Activated T-helper 1 cell treated with anti-CD3 and anti-CD28 coated beads, Interleukin-12 subunit alpha, Interleukin-12 subunit beta, Interleukin-2, Interleukin-4 antibody, amounts not matched to agents 30 ng/mL and 10 ng/mL and 1 ng/mL, durations not matched to agents 14 hours and 24 hours and 36 hours (primary cell): ENCODE measurements at regions of chr5 and their contacts with region 1.

Region 1: GRCh38 chr5:35003018-35003957 is 44.5 kb downstream of the AGXT2 start:
- DNase-seq: peak; percentile 40
- H3K4me3 Mint-ChIP-seq: no peak overlapping the region
- H3K27ac Mint-ChIP-seq: no peak overlapping the region
- H3K4me1 Mint-ChIP-seq: no peaks in the 10 kb centered on the region
- H3K27me3 Mint-ChIP-seq: peaks cover 9% of the 10 kb centered on the region

Region 2: DNA sequence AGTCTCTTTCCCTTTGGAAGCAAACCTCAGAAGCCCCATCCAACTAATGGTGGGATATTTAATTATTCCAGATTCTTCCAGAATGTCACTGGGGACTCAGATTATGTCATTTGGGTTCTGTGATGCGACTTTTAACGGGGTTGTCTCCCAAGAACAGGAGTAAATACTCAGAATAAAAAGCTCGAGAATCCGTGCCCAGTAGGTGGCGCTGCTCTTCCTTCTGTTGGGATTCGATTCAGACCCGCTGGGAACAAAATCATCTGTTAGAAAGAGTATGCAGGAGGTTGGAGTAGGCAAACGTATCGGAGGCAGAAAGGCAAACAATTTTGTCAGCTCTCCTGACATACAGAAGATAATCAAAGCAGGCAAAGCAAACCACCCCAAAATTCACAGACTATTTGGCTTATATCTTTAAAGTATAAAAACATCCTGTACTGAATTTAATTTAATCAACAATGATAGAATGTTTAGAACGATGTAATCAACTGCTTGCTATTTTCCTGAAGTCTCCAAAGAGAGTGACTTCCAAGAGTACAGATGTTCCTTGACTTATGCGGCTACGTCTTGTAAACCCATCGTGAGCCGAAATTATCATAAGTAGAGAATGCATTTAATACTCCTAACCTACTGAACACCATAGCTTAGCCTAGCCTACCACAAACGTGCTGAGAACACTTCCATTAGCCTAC is 517.0 kb before region 1 on chr5:
- intact Hi-C with region 1: loop called (anchors 1 kb)
- DNase-seq: peak; percentile 26
- H3K4me3 Mint-ChIP-seq: no peak overlapping the region
- H3K27ac Mint-ChIP-seq: no peak overlapping the region
- H3K4me1 Mint-ChIP-seq: no peaks in the 10 kb centered on the region
- H3K27me3 Mint-ChIP-seq: peaks cover 18% of the 10 kb centered on the region

Region 3: DNA sequence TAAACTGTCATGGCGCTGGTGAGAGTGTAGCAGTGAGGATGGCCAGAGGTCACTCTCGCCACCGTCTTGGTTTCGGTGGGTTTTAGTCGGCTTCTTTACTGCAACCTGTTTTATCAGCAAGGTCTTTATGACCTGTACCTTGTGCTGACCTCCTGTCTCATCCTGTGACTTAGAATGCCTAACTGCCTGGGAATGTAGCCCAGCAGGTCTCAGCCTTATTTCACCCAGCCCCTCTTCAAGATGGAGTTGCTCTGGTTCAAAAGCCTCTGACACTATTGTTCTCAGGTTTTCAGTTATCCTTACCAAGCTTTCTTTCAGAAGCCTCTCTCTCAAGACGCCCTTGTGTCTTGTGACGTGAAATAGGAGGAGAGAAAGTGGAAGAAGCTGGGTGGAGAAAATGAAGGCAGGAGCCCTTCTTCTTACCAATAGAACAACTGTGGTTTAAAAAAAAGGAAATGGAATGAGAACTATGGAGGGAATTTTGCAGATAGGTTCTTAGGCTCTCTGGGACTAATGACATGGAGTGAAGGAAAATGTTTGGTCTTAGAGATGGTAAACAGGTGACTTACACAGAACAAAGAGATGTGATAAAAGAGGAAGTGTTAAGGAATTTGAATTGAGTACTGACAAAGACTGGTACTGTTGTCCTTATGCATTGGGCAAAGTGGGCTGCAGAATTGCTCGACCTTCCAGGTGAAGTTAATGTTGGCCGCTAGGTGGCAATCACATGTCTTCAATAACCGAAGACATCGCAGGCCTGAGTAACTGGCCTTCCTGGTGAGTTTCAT is 480.5 kb before region 1 on chr5:
- intact Hi-C with region 1: loop called (anchors 1 kb)
- DNase-seq: peak; percentile 29
- H3K4me3 Mint-ChIP-seq: no peak overlapping the region
- H3K27ac Mint-ChIP-seq: no peak overlapping the region
- H3K4me1 Mint-ChIP-seq: peaks cover 8% of the 10 kb centered on the region
- H3K27me3 Mint-ChIP-seq: peaks cover under 1% of the 10 kb centered on the region

Region 4: DNA sequence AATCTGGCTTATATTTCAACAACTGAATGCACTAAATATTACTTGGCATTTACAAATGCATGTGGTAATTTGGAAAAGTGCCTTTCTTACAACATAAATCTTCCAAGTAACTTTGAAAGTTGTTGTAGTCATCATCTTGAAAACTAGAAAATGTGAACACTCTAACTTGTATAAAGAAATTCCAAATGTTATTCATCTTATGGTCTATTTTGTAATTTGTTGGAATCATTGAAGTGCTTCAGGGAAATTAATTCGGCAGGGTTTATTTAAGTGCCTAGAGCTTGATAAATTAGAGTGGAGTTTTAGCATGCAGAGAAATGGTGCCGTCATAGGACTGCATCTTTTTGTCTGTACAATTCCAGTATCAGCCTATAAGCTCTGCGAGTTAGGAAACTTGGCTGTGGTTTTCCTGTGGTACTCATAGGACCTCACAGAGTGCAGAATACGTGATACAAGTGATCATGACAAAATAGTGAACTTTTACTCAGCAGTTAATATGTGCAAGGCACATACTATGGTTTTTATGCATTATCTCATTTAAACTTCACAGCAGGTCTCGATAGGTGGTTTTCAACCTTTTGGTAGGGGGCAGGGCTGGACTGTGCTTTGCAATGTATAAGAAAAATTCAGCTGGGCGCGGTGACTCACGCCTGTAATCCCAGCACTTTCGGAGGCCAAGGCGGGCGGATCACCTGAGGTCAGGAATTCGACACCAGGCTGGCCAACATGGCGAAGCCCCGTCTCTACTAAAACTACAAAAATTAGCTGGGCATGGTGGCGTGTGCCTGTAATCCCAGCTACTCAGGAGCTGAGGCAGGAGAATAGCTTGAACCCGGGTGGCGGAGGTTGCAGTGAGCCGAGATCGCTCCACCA is 267.6 kb before region 1 on chr5:
- intact Hi-C with region 1: no loop called
- DNase-seq: no peak
- H3K4me3 Mint-ChIP-seq: no peak overlapping the region
- H3K27ac Mint-ChIP-seq: no peak overlapping the region
- H3K4me1 Mint-ChIP-seq: no peaks in the 10 kb centered on the region
- H3K27me3 Mint-ChIP-seq: peaks cover 2% of the 10 kb centered on the region

Region 5: DNA sequence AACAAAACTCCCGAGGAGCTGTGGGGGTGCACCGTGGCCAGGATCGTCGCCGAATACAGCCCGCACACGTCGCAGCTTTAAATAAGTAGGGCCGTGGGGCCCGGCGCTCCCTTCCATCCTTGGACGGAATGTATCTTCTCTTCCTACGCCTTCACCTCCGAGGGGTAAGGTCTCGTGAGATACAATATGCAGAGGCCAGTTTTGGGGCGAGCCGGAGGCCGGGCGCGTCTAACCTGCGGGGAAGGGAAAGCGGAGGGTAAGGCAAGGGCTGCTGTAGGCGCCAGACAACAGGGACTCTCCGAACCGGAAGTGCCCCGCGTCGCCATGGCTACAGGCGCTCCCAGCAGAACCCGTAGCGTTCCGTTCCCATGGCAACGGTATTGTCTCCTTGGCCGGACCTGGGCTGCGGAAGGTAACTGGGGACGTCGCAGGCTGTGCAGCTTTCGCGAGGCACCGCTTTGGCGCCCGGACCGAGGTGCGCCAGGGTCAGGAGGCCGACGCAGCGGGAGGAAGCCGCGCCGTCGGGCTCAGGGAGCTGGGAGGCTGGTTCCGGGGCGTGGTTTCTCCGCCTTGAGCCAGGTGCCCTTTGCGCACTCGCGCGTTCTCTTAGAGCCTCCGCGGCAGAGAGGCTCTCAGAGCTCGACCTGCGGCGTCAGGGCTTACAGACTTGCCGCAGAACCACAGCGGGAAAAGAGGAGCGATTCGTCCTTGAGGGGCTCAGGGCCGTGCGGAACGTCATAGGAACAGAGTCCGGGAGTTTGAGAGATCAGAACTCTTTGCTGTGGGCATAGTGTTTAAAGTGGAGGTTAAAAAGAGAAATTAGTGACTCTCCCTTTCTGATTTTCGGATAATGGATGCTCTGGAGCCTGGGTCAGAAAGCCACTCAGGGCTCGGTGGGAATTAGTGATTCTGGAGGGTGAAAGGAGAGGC is 164.2 kb before region 1 on chr5 and contains the start of gene TTC23L:
- intact Hi-C with region 1: loop called (anchors 2 kb)
- DNase-seq: peak; percentile 88
- H3K4me3 Mint-ChIP-seq: peak within 1 kb of the TSS; percentile 93
- H3K27ac Mint-ChIP-seq: peak within 1 kb of the TSS; percentile 81
- H3K4me1 Mint-ChIP-seq: peaks cover 15% of the 10 kb centered on the region
- H3K27me3 Mint-ChIP-seq: peaks cover 11% of the 10 kb centered on the region
- total RNA-seq, gene TTC23L: not detected in 2 replicates

Region 6: DNA sequence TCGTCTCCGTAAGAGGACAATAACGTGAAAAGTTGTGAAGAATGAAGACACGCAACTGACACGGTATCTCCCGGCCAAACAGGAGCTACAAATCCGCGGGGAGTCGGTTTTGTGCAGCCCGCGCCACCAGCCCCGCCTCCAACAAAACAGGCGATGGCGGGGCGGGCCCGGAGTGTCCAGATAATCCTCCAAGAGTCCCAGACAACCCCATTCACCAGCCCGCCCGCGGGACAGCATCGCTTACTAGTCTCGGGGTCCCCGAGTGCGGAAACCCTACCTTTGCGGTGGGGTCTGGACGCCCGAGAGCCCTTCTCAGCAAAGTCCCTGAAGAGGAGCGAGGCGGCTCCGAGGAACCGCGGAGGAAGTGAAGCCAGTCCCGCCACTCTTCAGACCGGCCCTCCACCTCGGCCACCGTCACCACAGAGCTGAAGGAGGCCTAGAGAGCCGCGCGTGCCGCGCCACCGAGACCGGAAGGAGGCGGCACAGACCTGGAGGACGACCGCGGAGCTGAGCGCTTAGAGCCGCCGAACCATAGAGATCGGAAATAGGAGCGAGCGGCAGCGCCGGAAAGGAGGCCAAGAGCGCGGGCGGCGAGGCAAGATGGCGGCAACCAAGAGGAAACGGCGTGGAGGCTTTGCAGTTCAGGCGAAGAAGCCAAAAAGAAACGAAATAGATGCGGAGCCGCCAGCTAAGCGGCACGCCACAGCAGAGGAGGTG is 88.0 kb before region 1 on chr5 and contains the starts of genes BRIX1 and RAD1:
- intact Hi-C with region 1: loop called (anchors 5 kb)
- DNase-seq: peak; percentile 94
- H3K4me3 Mint-ChIP-seq: no peak within 1 kb of the TSS
- H3K27ac Mint-ChIP-seq: peak within 1 kb of the TSS; percentile 74
- H3K4me1 Mint-ChIP-seq: peaks cover 35% of the 10 kb centered on the region
- H3K27me3 Mint-ChIP-seq: no peaks in the 10 kb centered on the region
- total RNA-seq, gene BRIX1: 110 TPM in 2 replicates
- total RNA-seq, gene RAD1: 45.7 and 47.1 TPM in 2 replicates

Region 7: DNA sequence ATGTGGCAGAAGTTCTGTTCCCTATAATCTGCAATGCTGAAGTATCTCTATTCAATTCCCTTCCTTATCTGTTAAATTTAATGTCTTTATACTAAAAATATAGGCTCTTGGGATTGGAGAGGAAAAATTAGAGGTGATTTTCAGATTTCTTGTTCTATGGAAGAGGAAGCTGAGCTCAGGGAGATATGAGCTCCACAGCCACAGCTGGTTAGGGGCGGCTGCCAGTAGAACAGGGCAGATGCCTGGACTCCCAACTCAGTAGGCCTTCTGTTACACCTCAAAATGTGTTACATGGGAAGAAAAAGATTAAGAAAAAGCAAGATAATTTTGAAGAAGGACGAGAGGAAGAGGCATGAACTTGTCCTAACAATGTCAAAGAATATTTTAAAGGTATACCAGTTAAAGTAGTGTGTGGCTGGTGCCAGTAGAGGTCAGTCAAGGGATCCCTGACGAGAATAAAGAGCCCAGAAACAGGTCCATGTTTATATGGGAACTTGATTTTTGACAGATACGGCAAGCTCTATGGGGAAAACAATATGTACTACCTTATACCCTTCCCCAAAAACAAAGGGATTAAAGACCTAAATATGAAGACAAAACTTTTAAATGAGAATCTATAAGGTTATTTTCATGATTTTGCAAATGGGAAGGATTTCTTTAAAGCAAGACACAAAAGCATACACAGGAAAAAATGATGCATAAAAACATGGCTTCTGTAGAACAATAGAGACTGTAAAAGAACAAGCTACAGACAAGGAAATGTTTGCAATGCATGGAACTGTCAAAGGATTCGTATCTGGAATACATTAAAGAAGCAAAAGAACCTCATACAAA is 45.2 kb before region 1 on chr5:
- intact Hi-C with region 1: loop called (anchors 1 kb)
- DNase-seq: no peak
- H3K4me3 Mint-ChIP-seq: no peak overlapping the region
- H3K27ac Mint-ChIP-seq: no peak overlapping the region
- H3K4me1 Mint-ChIP-seq: peaks cover 27% of the 10 kb centered on the region
- H3K27me3 Mint-ChIP-seq: no peaks in the 10 kb centered on the region